Left lung (tissue), 14 donors: ENCODE measurements at regions of chr1 and their contacts with region 1.

Region 1: GRCh38 chr1:209576798-209577197 is 6.7 kb upstream of the CAMK1G start:
- DNase-seq: peak; percentile 58 to 87 (median 80)
- ATAC-seq: peak; percentile 100
- H3K4me3 ChIP-seq: no peak overlapping the region
- H3K27ac ChIP-seq: no peak overlapping the region
- H3K4me1 ChIP-seq: no peaks in the 10 kb centered on the region
- H3K27me3 ChIP-seq: peaks cover 3 to 46% of the 10 kb centered on the region in 2 donors
- CTCF ChIP-seq: peak; percentile 92 to 96

Region 2: GRCh38 chr1:209627732-209628196 is 51.0 kb after region 1 on chr1:
- intact Hi-C with region 1: loop called in 1 of 2 experiments (anchors 5 kb)
- DNase-seq: peak in 3 of 4 donors; percentile 73 to 93 (median 78)
- ATAC-seq: peak; percentile 84
- H3K4me3 ChIP-seq: no peak overlapping the region
- H3K27ac ChIP-seq: no peak overlapping the region
- H3K4me1 ChIP-seq: peaks cover 3 to 22% of the 10 kb centered on the region in 2 donors
- H3K27me3 ChIP-seq: no peaks in the 10 kb centered on the region
- CTCF ChIP-seq: peak; percentile 95

Region 3: GRCh38 chr1:209692745-209693504 is 116.1 kb after region 1 on chr1:
- intact Hi-C with region 1: loop called (anchors 5 to 10 kb)
- DNase-seq: peak; percentile 45 to 89 (median 76)
- ATAC-seq: peak; percentile 86
- H3K4me3 ChIP-seq: no peak overlapping the region
- H3K27ac ChIP-seq: no peak overlapping the region
- H3K4me1 ChIP-seq: peaks cover 6 to 30% of the 10 kb centered on the region in 2 donors
- H3K27me3 ChIP-seq: no peaks in the 10 kb centered on the region
- CTCF ChIP-seq: peak; percentile 76 to 82

Region 4: DNA sequence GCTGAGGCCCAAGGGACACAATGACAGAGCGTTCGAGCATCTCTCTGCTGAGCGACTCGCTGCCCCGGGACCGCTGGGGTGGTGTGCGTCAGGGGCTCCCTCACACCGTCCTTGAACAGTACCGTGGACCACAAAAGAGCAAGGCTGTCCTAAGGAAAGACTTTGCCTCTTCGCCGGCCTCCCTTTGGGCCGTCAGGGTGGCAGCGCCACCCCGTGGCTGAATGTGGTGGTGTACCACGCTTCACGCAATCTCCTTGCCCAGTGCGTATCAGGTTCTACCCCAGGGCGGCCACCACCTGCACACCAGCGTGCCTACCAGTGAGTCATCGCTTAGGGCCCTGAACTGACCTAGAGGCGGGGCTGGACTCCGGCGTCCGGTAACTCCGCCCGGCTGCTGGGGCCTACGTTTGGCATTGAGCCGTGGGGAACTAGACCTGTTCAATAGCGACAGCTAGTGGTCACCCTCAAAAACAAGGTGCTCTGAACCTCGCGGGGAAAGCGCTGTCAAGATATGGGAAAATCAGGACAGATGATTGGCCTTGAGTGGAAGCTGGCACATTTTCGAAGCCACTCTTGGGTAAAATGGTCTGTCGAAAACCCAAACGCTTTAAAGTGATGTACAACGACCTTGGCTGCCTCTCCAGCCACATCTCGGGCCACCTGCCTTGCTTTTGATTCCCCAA is 170.9 kb after region 1 on chr1:
- intact Hi-C with region 1: loop called in 1 of 2 experiments (anchors 5 kb)
- DNase-seq: peak; percentile 83 to 97 (median 93)
- ATAC-seq: peak; percentile 99
- H3K4me3 ChIP-seq: peak overlapping the region; percentile 14 to 15
- H3K27ac ChIP-seq: peak overlapping the region in 1 of 2 donors; percentile 50
- H3K4me1 ChIP-seq: peaks cover 0 to 55% of the 10 kb centered on the region in 2 donors
- H3K27me3 ChIP-seq: no peaks in the 10 kb centered on the region
- CTCF ChIP-seq: peak; percentile 92 to 97